MCF 10A (cell line): ENCODE measurements at regions of chr4 and their contacts with region 1.

Region 1: GRCh38 chr4:76179398-76180318 is 31.5 kb upstream of the NUP54 start:
- DNase-seq: peak; percentile 87
- H3K4me3 Mint-ChIP-seq: no peak overlapping the region
- H3K27ac Mint-ChIP-seq: no peak overlapping the region
- H3K4me1 Mint-ChIP-seq: peaks cover 8% of the 10 kb centered on the region
- H3K27me3 Mint-ChIP-seq: no peaks in the 10 kb centered on the region
- CTCF ChIP-seq: peak; percentile 94

Region 2: DNA sequence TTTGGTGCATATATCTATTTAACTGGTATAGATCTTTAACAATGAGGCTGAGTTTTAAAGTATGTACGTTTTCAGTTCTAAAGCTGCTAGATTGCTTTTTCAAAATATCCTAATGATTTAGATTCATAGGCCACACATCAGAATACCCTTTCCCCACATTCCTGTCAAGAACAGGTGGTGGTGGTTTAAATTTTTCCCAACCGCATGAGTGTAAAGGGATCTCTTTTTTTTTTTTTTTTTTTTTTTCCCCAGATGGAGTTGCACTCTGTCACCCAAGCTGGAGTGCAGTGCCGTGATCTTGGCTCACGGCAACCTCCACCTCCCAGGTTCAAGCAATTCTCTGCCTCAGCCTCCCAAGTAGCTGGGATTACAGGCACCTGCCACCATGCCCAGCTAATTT is 59.5 kb before region 1 on chr4:
- CTCF ChIA-PET with region 1: no interaction called
- POLR2A ChIA-PET with region 1: no interaction called
- intact Hi-C with region 1: no loop called
- DNase-seq: no peak
- H3K4me3 Mint-ChIP-seq: no peak overlapping the region
- H3K27ac Mint-ChIP-seq: no peak overlapping the region
- H3K4me1 Mint-ChIP-seq: no peaks in the 10 kb centered on the region
- H3K27me3 Mint-ChIP-seq: no peaks in the 10 kb centered on the region
- CTCF ChIP-seq: no peak

Region 3: DNA sequence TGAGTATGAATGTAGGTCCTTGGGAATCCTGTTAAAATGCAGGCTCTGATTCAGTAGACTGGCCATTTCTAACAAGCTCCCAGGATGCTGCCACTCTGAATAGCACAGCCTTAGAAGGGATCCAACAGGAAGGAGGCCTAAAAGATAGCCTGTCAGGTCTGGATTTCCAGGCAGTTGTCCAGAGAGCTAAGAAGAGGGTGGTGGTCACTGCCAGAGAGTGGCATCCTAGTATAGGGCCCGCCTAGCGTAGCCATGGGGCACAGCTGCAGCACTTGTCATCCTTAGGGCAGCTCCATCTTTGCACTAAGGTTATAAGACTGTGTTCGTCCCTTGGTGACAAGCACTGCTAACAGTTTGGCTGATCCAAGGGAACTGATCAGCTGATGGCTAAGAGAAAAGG is 11.0 kb before region 1 on chr4:
- CTCF ChIA-PET with region 1: interaction called, 29 read pairs
- POLR2A ChIA-PET with region 1: no interaction called
- intact Hi-C with region 1: no loop called
- DNase-seq: no peak
- H3K4me3 Mint-ChIP-seq: no peak overlapping the region
- H3K27ac Mint-ChIP-seq: no peak overlapping the region
- H3K4me1 Mint-ChIP-seq: no peaks in the 10 kb centered on the region
- H3K27me3 Mint-ChIP-seq: no peaks in the 10 kb centered on the region
- CTCF ChIP-seq: no peak

Region 4: GRCh38 chr4:76213415-76214176 is 33.9 kb after region 1 on chr4 and contains the start of gene SCARB2:
- CTCF ChIA-PET with region 1: interaction called, 10 read pairs
- POLR2A ChIA-PET with region 1: interaction called, 19 read pairs
- intact Hi-C with region 1: loop called (anchors 2 kb)
- DNase-seq: peak; percentile 83
- H3K4me3 Mint-ChIP-seq: peak within 1 kb of the TSS; percentile 74
- H3K27ac Mint-ChIP-seq: peak within 1 kb of the TSS; percentile 78
- H3K4me1 Mint-ChIP-seq: peaks cover 50% of the 10 kb centered on the region
- H3K27me3 Mint-ChIP-seq: no peaks in the 10 kb centered on the region
- CTCF ChIP-seq: no peak
- total RNA-seq, gene SCARB2: 67.2 and 71.4 TPM in 2 replicates

Region 5: DNA sequence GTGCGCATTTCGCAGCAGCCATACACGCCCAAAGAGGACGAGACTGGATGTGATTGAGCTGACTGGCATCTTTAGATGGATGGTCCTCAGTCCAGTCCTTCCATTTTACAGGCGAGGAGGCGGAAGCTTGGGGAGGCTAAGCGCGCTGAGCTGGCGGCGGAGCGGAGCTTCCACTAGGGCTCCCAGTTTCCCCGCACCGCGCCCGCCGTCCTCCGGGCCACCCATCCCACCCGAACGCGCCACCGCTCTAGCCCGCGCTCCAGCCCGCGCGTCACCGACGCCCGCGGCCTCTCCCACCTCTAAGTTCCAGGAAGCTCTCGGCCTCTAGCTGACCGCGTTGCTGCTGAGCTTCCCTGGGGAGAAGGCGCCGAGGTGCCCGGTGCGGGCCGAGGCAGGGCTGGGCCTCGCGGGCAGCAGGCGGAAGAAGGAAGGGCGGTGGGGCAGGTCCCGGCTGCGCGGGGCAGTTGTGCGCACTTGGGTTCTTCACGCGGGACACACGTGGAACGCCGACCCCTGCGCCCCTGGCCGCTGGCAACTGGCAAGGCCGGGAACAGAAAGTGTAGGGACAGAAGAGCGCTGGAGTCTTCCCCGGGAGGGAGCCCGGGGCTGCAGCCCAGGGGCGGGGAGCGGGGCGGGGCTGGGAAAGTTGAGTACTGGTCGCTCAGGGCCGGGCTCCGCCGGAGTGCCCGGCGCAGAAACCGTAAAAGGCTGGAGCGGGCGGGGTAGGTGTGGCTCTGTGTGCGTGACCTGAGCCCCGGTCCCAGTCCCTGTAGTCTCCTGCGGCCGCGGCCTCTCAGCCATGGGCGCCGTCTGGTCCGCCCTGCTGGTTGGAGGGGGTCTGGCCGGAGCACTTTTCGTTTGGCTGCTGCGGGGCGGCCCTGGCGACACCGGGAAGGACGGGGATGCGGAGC is 126.6 kb after region 1 on chr4 and contains the start of gene STBD1:
- CTCF ChIA-PET with region 1: interaction called, 50 read pairs
- POLR2A ChIA-PET with region 1: interaction called, 30 read pairs
- intact Hi-C with region 1: loop called (anchors 1 kb)
- DNase-seq: peak; percentile 73
- H3K4me3 Mint-ChIP-seq: peak within 1 kb of the TSS; percentile 94
- H3K27ac Mint-ChIP-seq: peak within 1 kb of the TSS; percentile 66
- H3K4me1 Mint-ChIP-seq: peaks cover 39% of the 10 kb centered on the region
- H3K27me3 Mint-ChIP-seq: no peaks in the 10 kb centered on the region
- CTCF ChIP-seq: no peak
- total RNA-seq, gene STBD1: 3.7 and 5.7 TPM in 2 replicates

Region 6: GRCh38 chr4:76499461-76499860 is 319.8 kb after region 1 on chr4:
- CTCF ChIA-PET with region 1: interaction called, 31 read pairs
- POLR2A ChIA-PET with region 1: interaction called, 5 read pairs
- intact Hi-C with region 1: no loop called
- DNase-seq: no peak
- H3K4me3 Mint-ChIP-seq: no peak overlapping the region
- H3K27ac Mint-ChIP-seq: no peak overlapping the region
- H3K4me1 Mint-ChIP-seq: no peaks in the 10 kb centered on the region
- H3K27me3 Mint-ChIP-seq: no peaks in the 10 kb centered on the region
- CTCF ChIP-seq: no peak